ENCODE measurements at regions of chr12 and their contacts with region 1.

Region 1: GRCh38 chr12:120904197-120904773 is at the start of gene SPPL3:
- DNase-seq: peak; percentile 93 to 97 (median 96)
- ATAC-seq: peak; percentile 82 to 96 (median 94)
- H3K4me3 ChIP-seq: peak within 1 kb of the TSS; percentile 78 to 99 (median 92)
- H3K27ac ChIP-seq: peak within 1 kb of the TSS; percentile 77 to 95 (median 90)
- H3K4me1 ChIP-seq: peaks cover 0 to 37% (median 17%) of the 10 kb centered on the region in 12 donors
- H3K27me3 ChIP-seq: no peaks in the 10 kb centered on the region
- CTCF ChIP-seq: peak in 3 of 12 donors; percentile 12 to 21 (median 15)
- POLR2A ChIP-seq: peak in 1 of 2 donors; percentile 76
- total RNA-seq, gene SPPL3: 16.1 to 48.2 (median 27.0) TPM

Region 2: GRCh38 chr12:120725659-120726509 is 178.4 kb before region 1 on chr12 and contains the start of gene ACADS:
- intact Hi-C with region 1: loop called in 3 of 10 experiments (anchors 10 kb)
- DNase-seq: peak; percentile 91 to 96 (median 93)
- ATAC-seq: peak; percentile 94 to 99 (median 99)
- H3K4me3 ChIP-seq: peak within 1 kb of the TSS; percentile 59 to 93 (median 82)
- H3K27ac ChIP-seq: peak within 1 kb of the TSS; percentile 68 to 90 (median 85)
- H3K4me1 ChIP-seq: peaks cover 0 to 29% (median 15%) of the 10 kb centered on the region in 12 donors
- H3K27me3 ChIP-seq: no peaks in the 10 kb centered on the region
- CTCF ChIP-seq: peak in 4 of 12 donors; percentile 1 to 11 (median 4)
- POLR2A ChIP-seq: peak in 1 of 2 donors; percentile 77
- total RNA-seq, gene ACADS: 56.7 to 213 (median 78.8) TPM

Region 3: GRCh38 chr12:120761519-120761934 is 142.8 kb before region 1 on chr12:
- intact Hi-C with region 1: loop called in 2 of 10 experiments (anchors 10 kb)
- DNase-seq: no peak
- ATAC-seq: peak; percentile 68 to 84 (median 73)
- H3K4me3 ChIP-seq: peak overlapping the region in 3 of 12 donors; percentile 3 to 21 (median 4)
- H3K27ac ChIP-seq: peak overlapping the region; percentile 42 to 86 (median 70)
- H3K4me1 ChIP-seq: peaks cover 0 to 21% (median 10%) of the 10 kb centered on the region in 12 donors
- H3K27me3 ChIP-seq: no peaks in the 10 kb centered on the region
- CTCF ChIP-seq: no peak
- POLR2A ChIP-seq: no peak

Region 4: DNA sequence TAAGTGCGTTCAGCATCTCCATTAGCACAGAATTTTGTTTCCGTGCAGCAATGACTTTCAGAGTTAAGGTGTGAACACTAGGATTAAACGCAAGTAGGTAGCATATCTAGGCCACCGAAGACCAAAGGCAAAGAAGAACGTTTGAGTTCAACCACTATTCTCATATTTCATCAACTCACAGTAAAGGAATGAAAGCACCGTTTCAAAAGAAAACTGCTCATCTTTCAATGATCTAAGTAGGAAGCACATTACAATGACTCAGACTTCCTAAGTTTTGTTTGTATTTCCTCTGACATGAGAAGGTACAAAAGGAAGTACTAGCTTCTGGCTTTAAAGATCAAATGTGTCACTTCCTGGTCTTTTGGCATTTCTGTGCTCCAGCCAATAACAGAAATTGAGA is 121.1 kb before region 1 on chr12:
- intact Hi-C with region 1: loop called in 1 of 10 experiments (anchors 10 kb)
- DNase-seq: no peak
- ATAC-seq: peak in 3 of 4 donors; percentile 31 to 86 (median 33)
- H3K4me3 ChIP-seq: no peak overlapping the region
- H3K27ac ChIP-seq: peak overlapping the region in 11 of 12 donors; percentile 9 to 80 (median 54)
- H3K4me1 ChIP-seq: peaks cover 0 to 19% (median 3%) of the 10 kb centered on the region in 12 donors
- H3K27me3 ChIP-seq: no peaks in the 10 kb centered on the region
- CTCF ChIP-seq: no peak
- POLR2A ChIP-seq: no peak

Region 5: DNA sequence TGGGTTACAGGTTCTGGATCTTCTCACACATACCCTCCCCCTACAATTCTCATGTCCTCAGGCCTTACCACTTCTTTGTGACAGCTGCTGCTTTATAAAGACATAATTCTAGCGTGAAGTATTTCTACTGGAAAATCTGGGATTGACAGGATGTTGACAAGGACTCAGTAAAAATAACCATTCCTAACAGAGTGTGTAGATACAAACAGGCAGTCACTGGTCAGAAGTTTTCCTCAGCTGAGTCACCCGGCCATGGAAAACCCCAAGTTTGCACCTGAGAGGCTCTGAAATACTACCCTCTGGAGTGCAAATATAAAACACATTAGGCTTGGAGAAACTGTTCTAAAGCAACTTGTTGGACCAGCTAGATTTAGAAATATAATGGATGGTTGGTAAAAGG is 54.5 kb before region 1 on chr12:
- intact Hi-C with region 1: loop called in 1 of 10 experiments (anchors 10 kb)
- DNase-seq: no peak
- ATAC-seq: peak; percentile 31 to 84 (median 55)
- H3K4me3 ChIP-seq: no peak overlapping the region
- H3K27ac ChIP-seq: peak overlapping the region in 9 of 12 donors; percentile 16 to 73 (median 51)
- H3K4me1 ChIP-seq: peaks cover 0 to 89% (median 67%) of the 10 kb centered on the region in 12 donors
- H3K27me3 ChIP-seq: no peaks in the 10 kb centered on the region
- CTCF ChIP-seq: no peak
- POLR2A ChIP-seq: no peak

Region 6: DNA sequence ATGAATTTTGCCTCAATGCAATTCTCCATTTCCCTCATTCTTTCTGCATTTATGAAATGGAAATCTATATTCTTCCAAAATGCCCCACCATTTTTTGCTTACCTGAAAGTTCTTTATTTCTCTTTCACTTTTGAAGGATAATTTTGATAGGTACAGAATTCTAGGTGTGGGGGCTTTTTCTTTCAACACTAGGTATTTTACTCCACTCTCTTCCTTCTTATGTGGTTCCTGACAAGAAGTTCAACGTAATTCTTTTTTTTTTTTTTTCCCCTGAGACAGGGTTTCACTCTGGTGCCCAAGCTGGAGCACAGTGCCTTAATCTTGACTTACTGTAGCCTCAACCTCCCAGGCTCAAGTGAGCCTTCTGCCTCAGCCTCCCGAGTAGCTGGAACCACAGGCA is 161.1 kb after region 1 on chr12:
- intact Hi-C with region 1: no loop called
- DNase-seq: no peak
- ATAC-seq: no peak
- H3K4me3 ChIP-seq: no peak overlapping the region
- H3K27ac ChIP-seq: no peak overlapping the region
- H3K4me1 ChIP-seq: peaks cover 0 to 3% (median 0%) of the 10 kb centered on the region in 12 donors
- H3K27me3 ChIP-seq: peaks cover 0 to 11% (median 0%) of the 10 kb centered on the region in 9 donors
- CTCF ChIP-seq: no peak
- POLR2A ChIP-seq: no peak

Measured in heart left ventricle (tissue), 16 donors.